ENCODE measurements at regions of chr5 and their contacts with region 1.

Region 1: GRCh38 chr5:173625696-173626504 is 9.4 kb upstream of the BOD1 start:
- DNase-seq: no peak
- ATAC-seq: no peak
- H3K4me3 ChIP-seq: no peak overlapping the region
- H3K27ac ChIP-seq: no peak overlapping the region
- H3K4me1 ChIP-seq: no peaks in the 10 kb centered on the region
- H3K27me3 ChIP-seq: no peaks in the 10 kb centered on the region

Region 2: DNA sequence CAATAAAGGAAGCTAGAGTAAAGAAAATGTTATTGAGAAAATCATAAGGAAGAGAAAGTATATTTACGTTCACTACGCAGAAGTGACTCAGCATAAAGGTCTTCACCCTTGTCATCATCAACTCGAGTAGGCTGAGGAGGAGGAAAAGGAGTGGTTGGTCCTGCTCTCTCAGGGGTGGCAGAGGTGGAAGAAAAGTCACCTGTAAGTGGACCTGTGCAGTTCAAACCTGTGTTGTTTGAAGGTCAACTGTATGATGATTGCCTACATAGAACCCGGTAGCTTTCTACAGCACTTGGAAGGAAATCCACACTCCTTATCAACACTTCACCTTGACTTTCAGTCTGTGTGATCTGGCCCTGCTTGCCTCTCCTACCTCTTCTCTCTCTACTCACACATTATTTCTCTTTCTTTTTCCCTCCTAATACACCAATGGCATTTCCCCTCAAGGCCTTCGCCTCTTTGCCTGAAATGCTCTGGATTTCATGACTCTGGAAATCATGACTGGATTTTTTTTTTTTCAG is 152.9 kb after region 1 on chr5:
- intact Hi-C with region 1: loop called in 1 of 2 experiments (anchors 10 kb)
- DNase-seq: no peak
- ATAC-seq: no peak
- H3K4me3 ChIP-seq: no peak overlapping the region
- H3K27ac ChIP-seq: no peak overlapping the region
- H3K4me1 ChIP-seq: no peaks in the 10 kb centered on the region
- H3K27me3 ChIP-seq: no peaks in the 10 kb centered on the region

Region 3: GRCh38 chr5:173829817-173830216 is 203.9 kb after region 1 on chr5:
- intact Hi-C with region 1: loop called in 1 of 2 experiments (anchors 5 kb)
- DNase-seq: no peak
- ATAC-seq: no peak
- H3K4me3 ChIP-seq: no peak overlapping the region
- H3K27ac ChIP-seq: no peak overlapping the region
- H3K4me1 ChIP-seq: no peaks in the 10 kb centered on the region
- H3K27me3 ChIP-seq: no peaks in the 10 kb centered on the region

Measured in aorta (tissue), 5 donors.